Activated T-helper 1 cell treated with anti-CD3 and anti-CD28 coated beads, Interleukin-12 subunit alpha, Interleukin-12 subunit beta, Interleukin-2, Interleukin-4 antibody, amounts not matched to agents 30 ng/mL and 10 ng/mL and 1 ng/mL, durations not matched to agents 14 hours and 24 hours and 36 hours (primary cell): ENCODE measurements at regions of chr14 and their contacts with region 1.

Region 1: DNA sequence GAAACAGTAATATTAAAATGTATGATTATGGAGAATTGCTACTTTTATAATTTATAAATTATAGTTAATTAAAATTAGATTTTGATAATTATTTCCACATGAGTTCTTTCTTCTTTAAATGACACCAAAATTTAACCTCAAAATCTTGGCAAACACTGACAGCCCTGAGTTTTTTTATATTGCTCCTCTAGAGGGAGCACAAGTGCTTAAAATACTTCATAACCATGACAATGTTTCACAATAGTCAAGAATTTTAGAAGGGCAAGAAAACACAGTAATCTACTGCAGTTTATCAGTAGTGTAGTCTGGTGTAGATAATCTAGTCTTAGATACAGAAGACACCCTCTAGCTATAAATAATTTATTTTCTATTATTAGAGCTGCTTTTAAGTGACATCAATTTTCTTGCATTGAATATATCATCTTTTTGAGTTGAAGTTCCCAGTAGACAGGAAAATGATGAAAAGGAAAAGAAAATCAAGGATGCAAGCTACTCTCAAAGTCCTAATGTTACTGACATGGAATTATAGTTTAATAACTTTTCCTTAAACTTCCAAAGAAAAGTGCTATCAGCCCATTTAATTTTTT is 14.3 kb upstream of the PTGER2 start:
- DNase-seq: no peak
- H3K4me3 Mint-ChIP-seq: no peak overlapping the region
- H3K27ac Mint-ChIP-seq: no peak overlapping the region
- H3K4me1 Mint-ChIP-seq: peaks cover 47% of the 10 kb centered on the region
- H3K27me3 Mint-ChIP-seq: peaks cover 3% of the 10 kb centered on the region

Region 2: GRCh38 chr14:52351233-52352060 is 51.7 kb after region 1 on chr14:
- intact Hi-C with region 1: loop called (anchors 1 kb)
- DNase-seq: peak; percentile 8
- H3K4me3 Mint-ChIP-seq: peak overlapping the region; percentile 75
- H3K27ac Mint-ChIP-seq: peak overlapping the region; percentile 96
- H3K4me1 Mint-ChIP-seq: peaks cover 73% of the 10 kb centered on the region
- H3K27me3 Mint-ChIP-seq: no peaks in the 10 kb centered on the region

Region 3: GRCh38 chr14:52473557-52473956 is 173.8 kb after region 1 on chr14:
- intact Hi-C with region 1: loop called (anchors 1 kb)
- DNase-seq: no peak
- H3K4me3 Mint-ChIP-seq: no peak overlapping the region
- H3K27ac Mint-ChIP-seq: no peak overlapping the region
- H3K4me1 Mint-ChIP-seq: peaks cover 26% of the 10 kb centered on the region
- H3K27me3 Mint-ChIP-seq: no peaks in the 10 kb centered on the region

Region 4: GRCh38 chr14:52527049-52527448 is 227.3 kb after region 1 on chr14:
- intact Hi-C with region 1: loop called (anchors 5 kb)
- DNase-seq: no peak
- H3K4me3 Mint-ChIP-seq: no peak overlapping the region
- H3K27ac Mint-ChIP-seq: no peak overlapping the region
- H3K4me1 Mint-ChIP-seq: no peaks in the 10 kb centered on the region
- H3K27me3 Mint-ChIP-seq: no peaks in the 10 kb centered on the region

Region 5: GRCh38 chr14:52640137-52640536 is 340.4 kb after region 1 on chr14:
- intact Hi-C with region 1: loop called (anchors 10 kb)
- DNase-seq: no peak
- H3K4me3 Mint-ChIP-seq: no peak overlapping the region
- H3K27ac Mint-ChIP-seq: peak overlapping the region; percentile 41
- H3K4me1 Mint-ChIP-seq: peaks cover 14% of the 10 kb centered on the region
- H3K27me3 Mint-ChIP-seq: peaks cover 6% of the 10 kb centered on the region

Region 6: GRCh38 chr14:53093206-53093605 is 793.4 kb after region 1 on chr14:
- intact Hi-C with region 1: no loop called
- DNase-seq: no peak
- H3K4me3 Mint-ChIP-seq: no peak overlapping the region
- H3K27ac Mint-ChIP-seq: no peak overlapping the region
- H3K4me1 Mint-ChIP-seq: peaks cover 20% of the 10 kb centered on the region
- H3K27me3 Mint-ChIP-seq: no peaks in the 10 kb centered on the region